ENCODE measurements at regions of chr2 and their contacts with region 1.

Region 1: GRCh38 chr2:16496426-16497388 is 168.9 kb downstream of the CYRIA start:
- DNase-seq: no peak
- H3K4me3 Mint-ChIP-seq: no peak overlapping the region
- H3K27ac Mint-ChIP-seq: no peak overlapping the region
- H3K4me1 Mint-ChIP-seq: no peaks in the 10 kb centered on the region
- H3K27me3 Mint-ChIP-seq: peaks cover 30% of the 10 kb centered on the region
- CTCF ChIP-seq: no peak

Region 2: DNA sequence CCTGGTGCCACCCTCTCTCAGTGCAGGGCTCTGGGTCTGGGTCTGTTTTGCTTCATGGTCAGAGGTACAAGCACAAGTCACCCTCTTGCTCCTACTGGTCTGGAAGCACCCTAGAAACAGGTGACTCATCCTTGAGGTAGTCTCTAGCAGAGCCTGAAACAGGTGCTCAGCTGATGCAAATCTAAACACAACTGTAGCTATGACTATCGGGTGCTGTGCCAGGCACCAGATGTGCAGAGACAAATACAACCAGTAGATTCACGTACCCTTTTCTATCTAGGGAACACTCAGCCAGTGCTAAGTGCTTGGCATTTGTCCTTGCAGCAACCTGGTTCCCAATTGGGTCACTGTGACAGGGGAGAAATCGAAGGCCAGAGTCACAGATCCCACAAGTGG is 697.3 kb before region 1 on chr2:
- CTCF ChIA-PET with region 1: no interaction called
- intact Hi-C with region 1: loop called (anchors 10 kb)
- DNase-seq: peak; percentile 13
- H3K4me3 Mint-ChIP-seq: no peak overlapping the region
- H3K27ac Mint-ChIP-seq: no peak overlapping the region
- H3K4me1 Mint-ChIP-seq: peaks cover 12% of the 10 kb centered on the region
- H3K27me3 Mint-ChIP-seq: peaks cover 60% of the 10 kb centered on the region
- CTCF ChIP-seq: no peak

Region 3: DNA sequence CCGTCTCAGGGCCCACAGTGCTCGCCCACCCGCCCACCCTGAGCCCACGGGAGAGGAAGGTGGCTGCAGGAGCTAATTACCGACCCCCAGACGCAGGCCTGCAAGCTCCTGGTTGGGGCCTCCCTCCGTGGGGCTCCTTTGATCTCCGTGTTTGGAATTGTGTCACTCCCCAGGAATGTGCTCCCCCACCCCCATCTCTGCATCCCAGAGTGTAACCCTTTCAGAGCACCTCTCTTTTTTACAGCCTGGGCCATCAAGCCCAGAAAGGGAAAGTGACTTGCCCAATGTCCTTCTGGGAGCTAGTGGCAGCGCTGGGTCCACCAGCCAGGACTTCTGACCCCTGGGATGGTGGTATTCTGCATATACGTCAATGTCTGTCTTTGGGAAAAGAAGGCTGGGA is 166.1 kb before region 1 on chr2:
- CTCF ChIA-PET with region 1: no interaction called
- intact Hi-C with region 1: no loop called
- DNase-seq: no peak
- H3K4me3 Mint-ChIP-seq: no peak overlapping the region
- H3K27ac Mint-ChIP-seq: no peak overlapping the region
- H3K4me1 Mint-ChIP-seq: no peaks in the 10 kb centered on the region
- H3K27me3 Mint-ChIP-seq: no peaks in the 10 kb centered on the region
- CTCF ChIP-seq: no peak

Measured in Calu3 (cell line).